ENCODE measurements at regions of chr12 and their contacts with region 1.

Region 1: DNA sequence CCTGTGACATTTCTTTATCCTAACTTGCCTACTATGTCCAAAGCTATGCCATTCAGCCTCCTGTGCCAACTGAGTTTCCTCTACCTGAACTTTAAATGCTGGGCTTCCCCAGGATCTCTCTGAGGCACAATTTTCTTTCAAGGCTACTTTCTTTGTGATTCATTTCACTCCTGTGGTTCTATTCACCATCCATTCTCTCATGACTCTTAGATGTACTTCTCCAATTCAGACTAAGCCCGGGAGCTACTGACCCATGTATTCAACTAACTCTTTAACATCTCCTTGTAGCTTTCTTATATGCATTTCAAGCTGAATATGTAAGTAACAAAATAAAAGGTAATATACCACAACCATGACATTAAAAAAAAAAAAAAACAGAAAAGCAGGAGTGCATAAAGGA is 738.9 kb upstream of the USP15 start:
- DNase-seq: no peak
- H3K4me3 ChIP-seq: no peak overlapping the region
- H3K27ac ChIP-seq: peak overlapping the region; percentile 97
- H3K4me1 ChIP-seq: peaks cover 87% of the 10 kb centered on the region
- CTCF ChIP-seq: no peak

Region 2: GRCh38 chr12:59595883-59596540 is 1925.2 kb before region 1 on chr12 and contains the start of gene SLC16A7:
- CTCF ChIA-PET with region 1: no interaction called
- POLR2A ChIA-PET with region 1: no interaction called
- intact Hi-C with region 1: loop called (anchors 5 kb)
- DNase-seq: peak; percentile 92
- H3K4me3 ChIP-seq: peak within 1 kb of the TSS; percentile 80
- H3K27ac ChIP-seq: peak within 1 kb of the TSS; percentile 88
- H3K4me1 ChIP-seq: peaks cover 23% of the 10 kb centered on the region
- CTCF ChIP-seq: peak; percentile 41; the same call in 1 of the 2 replicates
- total RNA-seq, gene SLC16A7: 26.9 and 34.1 TPM in 2 replicates

Region 3: GRCh38 chr12:61502179-61502578 is 19.1 kb before region 1 on chr12:
- CTCF ChIA-PET with region 1: interaction called, 4 read pairs
- POLR2A ChIA-PET with region 1: interaction called, 15 read pairs
- intact Hi-C with region 1: no loop called
- DNase-seq: no peak
- H3K4me3 ChIP-seq: no peak overlapping the region
- H3K27ac ChIP-seq: no peak overlapping the region
- H3K4me1 ChIP-seq: no peaks in the 10 kb centered on the region
- CTCF ChIP-seq: no peak

Region 4: DNA sequence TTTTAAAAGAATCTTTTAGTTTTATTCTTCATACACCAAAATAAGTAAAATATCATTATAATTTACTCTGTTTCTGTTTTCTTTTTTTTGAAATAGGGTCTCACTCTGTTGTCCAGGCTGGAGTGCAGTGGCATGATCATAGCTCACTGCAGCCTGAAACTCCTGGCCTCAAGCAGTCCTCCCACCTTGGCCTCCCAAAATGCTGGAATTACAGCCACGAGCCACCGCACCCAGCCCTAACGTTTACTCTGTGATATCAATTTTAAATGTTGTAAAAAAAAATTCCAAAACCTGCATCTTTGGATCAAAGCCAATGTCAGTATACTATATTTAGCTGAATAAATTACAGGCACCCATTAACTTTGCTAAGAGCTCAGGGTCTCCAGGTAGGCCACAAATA is 301.8 kb after region 1 on chr12:
- CTCF ChIA-PET with region 1: no interaction called
- POLR2A ChIA-PET with region 1: no interaction called
- intact Hi-C with region 1: no loop called
- DNase-seq: no peak
- H3K4me3 ChIP-seq: no peak overlapping the region
- H3K27ac ChIP-seq: no peak overlapping the region
- H3K4me1 ChIP-seq: no peaks in the 10 kb centered on the region
- CTCF ChIP-seq: no peak

Region 5: GRCh38 chr12:62259993-62260732 is 738.9 kb after region 1 on chr12 and contains the start of gene USP15:
- CTCF ChIA-PET with region 1: interaction called, 3 read pairs
- POLR2A ChIA-PET with region 1: interaction called, 4 read pairs
- intact Hi-C with region 1: loop called (anchors 5 kb)
- DNase-seq: peak; percentile 98
- H3K4me3 ChIP-seq: peak within 1 kb of the TSS; percentile 92
- H3K27ac ChIP-seq: peak within 1 kb of the TSS; percentile 90
- H3K4me1 ChIP-seq: peaks cover 41% of the 10 kb centered on the region
- CTCF ChIP-seq: peak; percentile 65
- total RNA-seq, gene USP15: 43.3 and 65.7 TPM in 2 replicates

Region 6: GRCh38 chr12:62603061-62603810 is 1082.0 kb after region 1 on chr12:
- CTCF ChIA-PET with region 1: no interaction called
- POLR2A ChIA-PET with region 1: interaction called, 3 read pairs
- intact Hi-C with region 1: loop called (anchors 5 kb)
- DNase-seq: peak; percentile 94
- H3K4me3 ChIP-seq: peak overlapping the region; percentile 88
- H3K27ac ChIP-seq: peak overlapping the region; percentile 97
- H3K4me1 ChIP-seq: peaks cover 31% of the 10 kb centered on the region
- CTCF ChIP-seq: peak; percentile 54; the same call in 1 of the 2 replicates

Measured in OCI-LY7 (cell line).